Thyroid gland (tissue), 4 donors: ENCODE measurements at regions of chr1 and their contacts with region 1.

Region 1: GRCh38 chr1:5745776-5746610 is 246.2 kb downstream of the NPHP4 start:
- DNase-seq: peak; percentile 51 to 54
- H3K4me3 ChIP-seq: no peak overlapping the region
- H3K27ac ChIP-seq: no peak overlapping the region
- H3K4me1 ChIP-seq: no peaks in the 10 kb centered on the region
- H3K27me3 ChIP-seq: no peaks in the 10 kb centered on the region
- CTCF ChIP-seq: peak; percentile 70 to 91 (median 80)
- POLR2A ChIP-seq: no peak

Region 2: GRCh38 chr1:3910857-3911845 is 1834.8 kb before region 1 on chr1:
- intact Hi-C with region 1: loop called (anchors 10 kb)
- DNase-seq: peak; percentile 77 to 83
- H3K4me3 ChIP-seq: no peak overlapping the region
- H3K27ac ChIP-seq: no peak overlapping the region
- H3K4me1 ChIP-seq: peaks cover 0 to 5% of the 10 kb centered on the region in 2 donors
- H3K27me3 ChIP-seq: no peaks in the 10 kb centered on the region
- CTCF ChIP-seq: peak; percentile 39 to 81 (median 70)
- POLR2A ChIP-seq: no peak

Region 3: DNA sequence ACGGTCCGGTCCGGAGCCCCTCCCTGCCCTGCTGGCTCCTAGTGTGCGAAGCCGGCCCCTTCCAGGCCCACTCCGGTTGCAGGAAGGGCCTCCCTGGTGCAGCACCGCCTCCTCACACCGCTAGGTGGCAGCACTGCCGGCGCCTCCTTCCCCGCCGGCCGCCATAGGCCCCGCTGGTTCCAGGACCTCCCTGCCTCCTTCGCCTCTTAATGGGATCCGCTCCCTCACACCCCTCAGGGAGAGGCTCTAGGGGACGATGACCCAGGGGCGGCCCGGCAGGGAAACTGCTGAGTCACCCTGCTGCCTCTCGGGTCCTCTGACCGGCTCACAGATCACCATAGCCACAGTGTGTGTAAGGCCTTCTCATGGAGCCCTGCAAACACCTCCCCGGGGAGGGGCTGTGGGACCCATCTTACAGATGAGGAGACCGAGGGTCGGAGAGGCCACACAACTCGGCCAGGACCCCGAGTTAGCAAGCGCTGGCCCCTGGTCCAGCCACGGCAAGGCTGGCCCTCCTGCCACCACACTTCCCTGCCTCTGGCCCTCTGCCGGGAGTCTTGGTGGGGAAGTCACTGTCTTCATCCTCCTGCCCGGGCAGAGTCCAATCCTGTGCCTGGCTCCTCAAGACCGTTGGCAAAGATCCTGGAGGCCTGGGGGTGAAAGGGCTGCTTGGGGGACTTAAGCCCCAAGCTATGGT is 1093.2 kb before region 1 on chr1:
- intact Hi-C with region 1: loop called (anchors 10 kb)
- DNase-seq: peak; percentile 35 to 52
- H3K4me3 ChIP-seq: no peak overlapping the region
- H3K27ac ChIP-seq: no peak overlapping the region
- H3K4me1 ChIP-seq: peaks cover 7 to 18% of the 10 kb centered on the region in 2 donors
- H3K27me3 ChIP-seq: peaks cover 7% of the 10 kb centered on the region
- CTCF ChIP-seq: peak; percentile 62 to 97 (median 86)
- POLR2A ChIP-seq: no peak

Region 4: GRCh38 chr1:5254131-5254725 is 491.8 kb before region 1 on chr1:
- intact Hi-C with region 1: no loop called
- DNase-seq: no peak
- H3K4me3 ChIP-seq: no peak overlapping the region
- H3K27ac ChIP-seq: no peak overlapping the region
- H3K4me1 ChIP-seq: no peaks in the 10 kb centered on the region
- H3K27me3 ChIP-seq: no peaks in the 10 kb centered on the region
- CTCF ChIP-seq: no peak
- POLR2A ChIP-seq: no peak

Region 5: GRCh38 chr1:5514519-5515183 is 231.3 kb before region 1 on chr1:
- intact Hi-C with region 1: loop called (anchors 5 kb)
- DNase-seq: peak; percentile 62 to 75
- H3K4me3 ChIP-seq: no peak overlapping the region
- H3K27ac ChIP-seq: no peak overlapping the region
- H3K4me1 ChIP-seq: peaks cover 0 to 2% of the 10 kb centered on the region in 2 donors
- H3K27me3 ChIP-seq: no peaks in the 10 kb centered on the region
- CTCF ChIP-seq: peak; percentile 82 to 100 (median 98)
- POLR2A ChIP-seq: no peak